GM23248 (cell line): ENCODE measurements at regions of chr2 and their contacts with region 1.

Region 1: GRCh38 chr2:238790126-238790832 is 57.6 kb upstream of the TWIST2 start:
- DNase-seq: peak; percentile 79
- H3K4me3 ChIP-seq: peak overlapping the region; percentile 81
- H3K27ac ChIP-seq: peak overlapping the region; percentile 96
- H3K4me1 ChIP-seq: peaks cover 52% of the 10 kb centered on the region
- H3K27me3 ChIP-seq: no peaks in the 10 kb centered on the region

Region 2: DNA sequence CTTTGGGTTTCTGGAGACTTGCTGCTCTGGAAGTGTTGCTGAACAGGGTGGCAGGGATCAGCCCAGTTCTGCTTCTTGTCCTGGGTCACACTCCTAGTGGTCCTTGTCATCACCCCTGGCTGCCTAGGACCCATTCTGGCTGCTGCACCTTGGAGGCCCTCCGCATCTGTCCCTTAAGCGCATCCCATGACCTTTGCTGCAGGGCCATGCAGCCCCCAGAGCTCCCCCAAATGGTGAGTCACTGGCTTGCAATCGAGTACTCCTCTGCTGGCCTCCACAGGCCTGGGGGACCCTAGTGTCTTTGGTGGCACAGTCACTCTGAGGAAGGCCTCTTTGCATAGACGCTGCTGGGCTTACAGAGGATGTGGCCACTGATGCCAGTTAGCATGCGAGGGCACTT is 175.1 kb before region 1 on chr2:
- in situ Hi-C with region 1: no loop called
- DNase-seq: no peak
- H3K4me3 ChIP-seq: no peak overlapping the region
- H3K27ac ChIP-seq: no peak overlapping the region
- H3K4me1 ChIP-seq: no peaks in the 10 kb centered on the region
- H3K27me3 ChIP-seq: no peaks in the 10 kb centered on the region

Region 3: DNA sequence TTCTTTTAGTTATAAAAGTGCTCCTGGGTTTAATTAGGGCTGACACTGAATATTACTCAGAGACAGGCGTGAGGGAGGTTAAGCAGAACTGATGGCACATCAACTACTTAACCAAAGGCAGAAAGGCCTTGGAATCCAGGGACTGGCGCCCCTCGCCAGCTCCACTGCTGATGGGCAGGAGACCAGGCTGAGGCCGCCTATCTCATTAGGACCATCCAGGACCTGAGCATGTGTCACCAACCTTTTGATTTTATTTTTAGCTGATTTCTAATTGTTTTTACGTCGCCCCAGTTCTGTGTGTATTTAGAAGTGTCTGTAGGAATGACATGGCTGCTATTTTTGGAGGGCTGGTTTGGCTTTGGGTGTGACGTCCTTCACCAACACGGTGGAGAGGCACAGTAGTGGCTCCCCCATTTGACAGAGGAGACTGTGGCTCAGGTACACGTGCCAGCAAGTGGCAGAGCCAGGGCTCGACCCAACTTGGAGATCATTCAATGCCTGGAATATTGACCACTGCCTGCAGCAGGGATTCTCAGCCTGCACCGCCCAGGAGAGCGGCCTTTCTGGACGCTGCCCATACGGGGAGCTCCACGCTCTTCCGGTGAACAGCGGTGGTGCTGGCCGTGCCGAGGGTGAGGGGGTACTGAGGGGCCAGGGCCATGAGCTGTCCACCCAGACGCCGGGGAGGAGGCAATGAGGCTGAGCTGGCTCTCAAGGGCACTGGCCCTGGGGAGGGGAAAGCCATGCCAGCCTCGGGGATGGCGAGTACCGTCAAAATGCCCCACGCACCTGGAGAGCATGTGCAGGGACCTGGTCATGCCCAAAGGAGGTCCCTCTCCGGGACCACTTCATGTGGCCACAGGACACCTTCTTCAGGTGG is 157.9 kb before region 1 on chr2:
- in situ Hi-C with region 1: no loop called
- DNase-seq: no peak
- H3K4me3 ChIP-seq: no peak overlapping the region
- H3K27ac ChIP-seq: no peak overlapping the region
- H3K4me1 ChIP-seq: peaks cover 9% of the 10 kb centered on the region
- H3K27me3 ChIP-seq: no peaks in the 10 kb centered on the region; the same call in 1 of the 2 replicates

Region 4: DNA sequence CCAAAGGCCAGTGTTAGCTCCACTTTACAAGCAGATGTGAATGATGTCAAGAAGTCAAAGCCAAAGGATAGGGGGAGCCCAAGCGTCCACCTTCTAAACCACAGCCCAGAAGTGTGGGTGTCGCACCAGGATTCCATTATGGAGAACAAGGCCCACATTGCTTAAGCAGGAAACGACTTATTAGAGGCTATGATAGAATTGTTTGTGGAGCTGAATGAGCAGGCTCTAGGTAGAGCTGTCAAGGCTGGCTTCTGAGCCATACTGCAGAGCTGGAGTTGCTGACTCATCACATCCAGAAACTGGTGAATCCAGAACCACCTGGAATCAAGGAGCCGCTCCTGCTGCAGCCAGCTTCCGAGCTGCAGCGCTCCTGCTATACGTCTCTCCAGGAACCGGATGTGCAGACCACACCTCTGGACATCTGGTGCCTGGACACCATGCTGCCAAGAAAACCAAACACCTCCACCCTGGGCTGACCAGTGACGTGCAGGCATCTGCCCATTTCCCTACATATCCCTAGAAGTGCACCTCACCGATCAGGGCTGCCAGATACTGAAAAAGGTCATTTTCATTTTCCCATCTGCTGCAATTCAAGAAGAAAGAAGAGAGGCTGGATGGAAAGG is 51.4 kb after region 1 on chr2:
- in situ Hi-C with region 1: loop called (anchors 5 kb)
- DNase-seq: peak; percentile 87
- H3K4me3 ChIP-seq: no peak overlapping the region
- H3K27ac ChIP-seq: no peak overlapping the region
- H3K4me1 ChIP-seq: peaks cover 24% of the 10 kb centered on the region
- H3K27me3 ChIP-seq: no peaks in the 10 kb centered on the region

Region 5: DNA sequence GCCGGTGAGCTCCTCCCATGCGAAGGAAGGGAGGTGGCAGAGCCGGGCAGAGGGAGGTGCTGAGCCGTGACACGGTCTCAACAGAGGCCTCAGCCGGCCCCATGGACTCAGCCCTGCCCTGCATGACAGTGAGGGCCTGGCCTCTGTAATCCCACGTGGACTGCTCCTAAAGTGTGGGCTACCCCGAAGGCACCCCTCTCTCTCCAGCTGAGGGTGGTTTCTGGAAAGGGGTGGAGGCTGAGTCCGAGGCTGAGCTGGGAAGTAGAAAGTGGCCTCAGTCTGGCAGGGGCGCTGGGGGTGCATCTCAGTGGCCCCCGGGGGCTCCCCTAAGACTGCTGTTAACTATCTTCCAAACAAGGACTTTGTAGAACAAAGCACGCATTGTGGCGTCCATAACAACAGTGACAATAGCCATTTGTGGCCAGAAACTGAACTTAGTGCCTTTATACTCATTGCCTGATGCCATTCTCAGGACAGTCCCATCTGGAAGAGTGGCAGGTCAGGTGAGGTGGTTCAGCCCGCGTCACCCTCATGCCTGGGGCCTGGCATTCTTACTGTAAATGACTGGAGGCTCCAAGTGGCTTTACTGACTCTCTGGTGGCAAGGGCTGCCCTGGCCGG is 250.0 kb after region 1 on chr2:
- in situ Hi-C with region 1: no loop called
- DNase-seq: no peak
- H3K4me3 ChIP-seq: no peak overlapping the region
- H3K27ac ChIP-seq: no peak overlapping the region
- H3K4me1 ChIP-seq: no peaks in the 10 kb centered on the region
- H3K27me3 ChIP-seq: no peaks in the 10 kb centered on the region

Region 6: GRCh38 chr2:239465017-239466001 is 675.0 kb after region 1 on chr2:
- in situ Hi-C with region 1: no loop called
- DNase-seq: peak; percentile 55
- H3K4me3 ChIP-seq: no peak overlapping the region
- H3K27ac ChIP-seq: no peak overlapping the region
- H3K4me1 ChIP-seq: no peaks in the 10 kb centered on the region
- H3K27me3 ChIP-seq: peaks cover 8% of the 10 kb centered on the region; the same call in 1 of the 2 replicates